Heart left ventricle (tissue), 16 donors: ENCODE measurements at regions of chr9 and their contacts with region 1.

Region 1: DNA sequence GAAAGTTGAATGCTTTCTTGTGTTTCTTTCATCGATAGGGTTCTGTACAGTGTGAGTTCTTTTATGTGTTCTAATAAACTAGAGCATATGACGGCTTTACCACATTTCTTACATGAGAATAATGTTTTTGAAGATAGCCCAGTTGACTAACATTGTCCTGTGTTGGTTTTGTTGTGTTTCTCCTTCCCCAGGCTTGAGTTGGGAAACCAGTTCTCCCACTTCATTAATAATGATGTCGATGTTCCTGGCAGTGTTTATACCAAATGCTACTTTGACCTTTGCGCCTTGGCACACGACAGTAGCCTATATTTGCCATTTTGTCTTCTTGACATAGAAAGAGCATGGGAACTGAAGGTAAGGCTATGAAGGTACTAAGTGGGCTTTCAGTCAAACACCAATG is 14.4 kb upstream of the ZNF782 start:
- DNase-seq: no peak
- ATAC-seq: no peak
- H3K4me3 ChIP-seq: no peak overlapping the region
- H3K27ac ChIP-seq: no peak overlapping the region
- H3K4me1 ChIP-seq: no peaks in the 10 kb centered on the region
- H3K27me3 ChIP-seq: no peaks in the 10 kb centered on the region
- CTCF ChIP-seq: no peak
- POLR2A ChIP-seq: no peak

Region 2: GRCh38 chr9:97109194-97109811 is 240.6 kb after region 1 on chr9:
- intact Hi-C with region 1: loop called in 2 of 10 experiments (anchors 5 to 10 kb)
- DNase-seq: peak in 2 of 5 donors; percentile 25 to 47
- ATAC-seq: peak in 2 of 4 donors; percentile 58 to 61
- H3K4me3 ChIP-seq: no peak overlapping the region
- H3K27ac ChIP-seq: no peak overlapping the region
- H3K4me1 ChIP-seq: no peaks in the 10 kb centered on the region
- H3K27me3 ChIP-seq: peaks cover 0 to 5% (median 0%) of the 10 kb centered on the region in 9 donors
- CTCF ChIP-seq: peak; percentile 18 to 61 (median 44)
- POLR2A ChIP-seq: no peak